ENCODE measurements at regions of chr13 and their contacts with region 1.

Region 1: DNA sequence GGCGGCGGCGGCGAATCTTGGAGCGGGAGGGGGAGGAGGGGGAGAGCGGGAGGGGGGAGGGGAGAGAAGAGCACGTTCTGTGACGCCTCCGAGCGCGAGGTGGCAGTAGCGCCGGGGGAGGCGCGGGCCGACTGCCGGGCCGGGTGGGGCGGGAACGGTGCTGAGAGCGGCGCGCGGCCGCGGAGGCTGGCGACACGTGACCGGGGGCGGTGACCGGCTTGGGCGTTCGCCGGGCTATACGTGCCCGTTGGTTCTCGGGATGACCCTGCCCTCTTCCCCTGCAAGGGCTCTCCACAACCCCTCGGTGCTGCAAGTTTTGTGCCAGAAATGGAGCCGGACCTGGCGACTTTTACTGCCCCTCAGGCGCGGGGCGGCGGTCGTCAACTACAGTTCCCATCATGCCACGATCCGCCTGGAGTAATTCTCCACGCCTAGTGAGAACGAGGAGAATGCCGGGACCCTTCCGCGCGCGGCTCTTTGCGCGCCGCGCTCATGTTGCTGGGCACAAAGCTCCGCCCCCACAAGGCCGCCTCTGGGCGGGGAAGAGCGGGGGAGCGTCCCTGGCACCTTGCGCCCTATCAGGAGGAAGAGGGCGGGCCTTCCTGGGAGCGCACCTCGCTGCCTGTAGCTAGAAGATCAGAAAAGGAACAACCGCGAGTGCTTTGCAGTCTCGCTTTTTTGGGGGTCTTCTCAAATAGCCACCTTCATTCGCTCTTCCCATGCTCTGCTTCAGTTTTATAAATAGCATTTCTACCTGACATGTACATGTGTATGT is at the start of gene KPNA3:
- DNase-seq: peak; percentile 89
- ATAC-seq: peak; percentile 95
- H3K4me3 ChIP-seq: peak within 1 kb of the TSS; percentile 72 to 81 (median 80)
- H3K27ac ChIP-seq: peak within 1 kb of the TSS; percentile 96
- H3K4me1 ChIP-seq: peaks cover 41% of the 10 kb centered on the region
- H3K27me3 ChIP-seq: no peaks in the 10 kb centered on the region; a peak in 1 of 5 replicates
- CTCF ChIP-seq: peak; percentile 64
- EP300 ChIP-seq: no peak
- POLR2A ChIP-seq: peak; percentile 87 to 92
- RAD21 ChIP-seq: peak; percentile 63
- total RNA-seq, gene KPNA3: 28.9 and 69.8 TPM in 2 replicates

Region 2: DNA sequence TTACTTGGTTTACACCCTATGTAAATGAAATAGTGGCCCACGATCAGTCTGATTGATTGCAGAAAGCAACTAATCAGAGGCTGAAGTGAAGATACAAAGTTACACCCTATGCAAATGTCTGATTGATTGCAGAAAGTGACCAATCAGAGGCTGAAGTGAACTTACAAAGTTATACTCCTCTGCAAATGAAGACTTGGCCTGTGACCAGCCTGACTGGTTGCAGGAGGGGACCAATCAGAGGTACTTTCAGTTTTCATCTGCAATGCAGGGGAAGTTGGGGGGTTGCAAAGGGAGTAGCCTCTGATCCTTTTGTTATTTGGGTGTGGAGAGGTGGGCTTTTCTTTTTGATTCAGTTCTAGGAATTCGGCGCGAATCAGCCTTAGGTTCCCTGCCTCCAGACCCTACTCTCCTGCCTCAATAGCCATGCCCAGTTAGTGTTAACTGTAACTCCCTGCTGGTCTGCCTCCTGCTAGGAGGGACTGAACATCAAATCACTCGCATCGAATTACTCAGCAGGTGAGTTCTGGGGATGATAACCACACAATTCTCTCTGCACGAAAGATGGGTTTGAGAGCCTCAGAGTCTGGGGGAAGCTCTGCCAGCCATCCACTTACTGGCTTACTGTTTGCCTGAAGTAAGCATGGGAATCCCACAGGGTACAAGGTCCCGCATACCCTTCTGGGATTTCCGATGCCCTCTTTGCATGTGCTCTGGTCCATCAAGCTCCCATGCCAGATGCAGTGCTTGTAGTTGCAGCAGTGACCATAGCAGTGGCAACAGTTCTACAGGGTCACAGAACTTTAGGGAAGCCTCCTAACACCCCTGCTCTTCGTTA is 156.9 kb before region 1 on chr13:
- CTCF ChIA-PET with region 1: no interaction called
- POLR2A ChIA-PET with region 1: no interaction called
- in situ Hi-C with region 1: no loop called
- intact Hi-C with region 1: no loop called
- DNase-seq: peak; percentile 32
- ATAC-seq: peak; percentile 79
- H3K4me3 ChIP-seq: no peak overlapping the region
- H3K27ac ChIP-seq: no peak overlapping the region
- H3K4me1 ChIP-seq: peaks cover 9% of the 10 kb centered on the region
- H3K27me3 ChIP-seq: no peaks in the 10 kb centered on the region; a peak in 1 of 5 replicates
- CTCF ChIP-seq: no peak
- EP300 ChIP-seq: no peak
- POLR2A ChIP-seq: no peak
- RAD21 ChIP-seq: no peak

Region 3: DNA sequence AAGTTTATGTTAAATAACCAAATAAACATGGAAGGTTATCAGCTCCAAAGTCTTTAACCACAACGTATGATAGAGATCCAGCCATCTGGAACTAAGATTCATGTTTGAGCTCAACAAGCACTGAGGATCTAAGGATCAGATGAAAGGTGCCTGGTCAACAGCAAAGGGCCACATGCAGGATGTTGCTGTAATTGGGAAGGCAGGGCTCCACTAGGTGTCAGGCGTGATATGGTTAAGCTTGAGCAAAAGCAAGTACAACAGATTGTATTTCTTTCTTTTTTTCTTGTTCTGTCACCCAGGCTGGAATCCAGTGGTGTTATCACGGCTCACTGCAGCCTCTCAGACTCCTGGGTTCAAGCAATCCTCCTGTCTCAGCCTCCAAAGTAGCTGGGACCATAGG is 113.5 kb before region 1 on chr13:
- CTCF ChIA-PET with region 1: no interaction called
- POLR2A ChIA-PET with region 1: interaction called, 3 read pairs
- in situ Hi-C with region 1: no loop called
- intact Hi-C with region 1: loop called (anchors 2 kb)
- DNase-seq: peak; percentile 39
- ATAC-seq: peak; percentile 76
- H3K4me3 ChIP-seq: no peak overlapping the region
- H3K27ac ChIP-seq: no peak overlapping the region
- H3K4me1 ChIP-seq: peaks cover 7% of the 10 kb centered on the region
- H3K27me3 ChIP-seq: no peaks in the 10 kb centered on the region
- CTCF ChIP-seq: peak; percentile 66
- EP300 ChIP-seq: no peak
- POLR2A ChIP-seq: no peak
- RAD21 ChIP-seq: 0 out of 2 replicates have a peak, but pooled peaks have one; percentile 13

Region 4: DNA sequence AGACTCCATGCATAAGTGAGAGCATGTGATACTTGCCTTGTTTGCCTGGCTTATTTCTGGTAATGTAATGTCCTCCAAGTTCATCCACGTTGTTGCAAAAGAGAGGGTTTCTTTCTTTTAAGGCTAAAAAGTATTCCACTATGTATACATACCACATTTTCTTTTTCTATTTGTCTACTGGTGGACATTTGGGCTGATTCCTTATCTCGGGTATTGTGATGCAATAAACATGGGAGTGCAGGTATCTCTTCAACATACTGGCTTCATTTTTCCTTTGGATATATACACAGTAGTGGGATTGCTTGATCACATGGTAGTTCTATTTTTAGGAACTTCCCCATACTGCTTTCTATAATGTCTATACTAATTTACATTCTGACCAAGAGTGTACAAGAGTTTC is 51.9 kb before region 1 on chr13:
- CTCF ChIA-PET with region 1: no interaction called
- POLR2A ChIA-PET with region 1: interaction called, 11 read pairs
- in situ Hi-C with region 1: no loop called
- intact Hi-C with region 1: loop called (anchors 2 kb)
- DNase-seq: peak; percentile 74
- ATAC-seq: peak; percentile 76
- H3K4me3 ChIP-seq: no peak overlapping the region
- H3K27ac ChIP-seq: no peak overlapping the region
- H3K4me1 ChIP-seq: peaks cover 36% of the 10 kb centered on the region
- H3K27me3 ChIP-seq: no peaks in the 10 kb centered on the region
- CTCF ChIP-seq: no peak
- EP300 ChIP-seq: peak in 1 of 2 experiments; percentile 64; a peak in 1 of 4 replicates
- POLR2A ChIP-seq: no peak
- RAD21 ChIP-seq: no peak

Region 5: DNA sequence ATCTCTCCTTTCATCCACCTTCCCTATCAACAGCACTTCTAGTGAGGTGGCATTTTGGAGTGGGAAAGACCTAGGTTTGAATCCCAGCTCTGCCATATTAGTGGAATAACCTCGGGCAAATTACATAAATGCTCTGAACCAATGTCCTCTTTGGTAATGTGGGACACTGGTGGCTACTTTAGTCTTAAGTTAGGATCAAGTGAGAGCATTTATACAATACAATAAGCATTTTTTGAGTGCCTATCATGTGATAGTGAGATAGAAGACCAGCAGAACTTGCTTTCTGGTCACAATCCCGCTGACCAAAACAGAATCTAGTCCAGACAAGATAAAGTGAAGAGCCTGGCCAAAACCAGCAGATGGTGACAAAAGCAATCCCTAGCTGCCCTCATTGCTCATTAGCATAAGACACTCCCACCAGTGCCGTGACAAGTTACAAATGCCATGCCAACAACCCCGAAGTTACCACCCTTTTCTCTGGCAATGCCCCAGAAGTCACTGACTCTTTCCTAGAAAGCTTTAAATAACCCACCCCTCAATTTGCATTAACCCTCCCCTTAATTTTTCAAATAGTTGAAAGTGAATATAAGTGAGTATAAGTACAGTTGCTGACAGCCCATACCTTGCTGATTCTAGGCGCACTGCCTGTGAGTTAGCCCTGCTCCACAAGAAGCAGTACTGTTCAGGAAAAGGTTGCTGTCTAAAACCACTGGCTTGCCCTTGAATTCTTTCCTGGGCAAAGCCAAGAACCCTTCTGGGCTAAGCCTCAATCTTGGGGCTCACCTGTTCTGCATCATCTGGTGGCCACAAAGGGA is 28.7 kb after region 1 on chr13:
- CTCF ChIA-PET with region 1: no interaction called
- POLR2A ChIA-PET with region 1: interaction called, 29 read pairs
- in situ Hi-C with region 1: no loop called
- intact Hi-C with region 1: no loop called
- DNase-seq: no peak
- ATAC-seq: no peak; the same call in 2 of the 3 replicates
- H3K4me3 ChIP-seq: no peak overlapping the region
- H3K27ac ChIP-seq: peak overlapping the region; percentile 53
- H3K4me1 ChIP-seq: peaks cover 27% of the 10 kb centered on the region
- H3K27me3 ChIP-seq: no peaks in the 10 kb centered on the region
- CTCF ChIP-seq: no peak
- EP300 ChIP-seq: no peak
- POLR2A ChIP-seq: no peak
- RAD21 ChIP-seq: no peak

Region 6: GRCh38 chr13:49936085-49936940 is 143.6 kb after region 1 on chr13 and contains the start of gene SPRYD7:
- CTCF ChIA-PET with region 1: no interaction called
- POLR2A ChIA-PET with region 1: interaction called, 10 read pairs
- in situ Hi-C with region 1: no loop called
- intact Hi-C with region 1: loop called (anchors 5 kb)
- DNase-seq: peak; percentile 95
- ATAC-seq: peak; percentile 98
- H3K4me3 ChIP-seq: peak within 1 kb of the TSS; percentile 81 to 94 (median 88)
- H3K27ac ChIP-seq: peak within 1 kb of the TSS; percentile 74
- H3K4me1 ChIP-seq: peaks cover 41% of the 10 kb centered on the region
- H3K27me3 ChIP-seq: no peaks in the 10 kb centered on the region; a peak in 1 of 5 replicates
- CTCF ChIP-seq: peak; percentile 99
- EP300 ChIP-seq: peak in 1 of 2 experiments; percentile 46; a peak in 1 of 4 replicates
- POLR2A ChIP-seq: peak; percentile 49 to 88
- RAD21 ChIP-seq: peak; percentile 81
- total RNA-seq, gene SPRYD7: 5.9 and 6.8 TPM in 2 replicates

Region 7: DNA sequence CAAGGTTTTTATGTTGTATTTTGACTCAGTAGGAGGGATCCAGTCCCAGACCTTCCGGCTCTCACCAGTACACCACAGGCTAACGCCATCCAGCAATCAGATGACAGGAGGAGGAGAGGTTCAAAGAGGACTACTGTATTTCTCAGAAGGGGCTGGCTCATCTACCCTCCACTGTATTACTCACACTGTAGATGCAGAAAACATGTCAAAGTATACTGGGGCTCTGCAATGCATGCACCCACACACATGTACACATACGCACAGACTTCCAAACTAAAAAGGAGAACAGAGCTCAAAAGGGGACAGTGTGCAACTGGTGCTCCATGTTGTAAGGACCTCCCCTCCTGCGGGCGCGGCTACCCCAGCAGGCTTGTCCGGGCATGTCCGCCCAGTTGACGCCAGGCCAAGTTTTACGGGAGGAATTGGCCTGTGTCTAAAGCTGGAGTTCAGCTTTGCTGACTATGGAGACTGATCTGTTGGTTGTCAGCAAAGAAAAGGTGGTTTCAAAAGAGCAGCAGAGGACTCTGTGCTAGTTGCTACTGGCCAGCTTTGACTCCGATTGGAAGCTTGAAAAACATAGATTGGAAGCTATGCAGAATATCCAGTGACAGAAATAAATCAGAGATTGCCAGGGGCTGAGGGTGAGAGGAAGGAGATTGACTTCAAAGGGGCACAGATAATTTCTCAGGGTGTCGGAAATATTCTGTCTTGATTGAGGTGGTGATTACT is 736.6 kb after region 1 on chr13:
- CTCF ChIA-PET with region 1: no interaction called
- POLR2A ChIA-PET with region 1: no interaction called
- in situ Hi-C with region 1: no loop called
- intact Hi-C with region 1: no loop called
- DNase-seq: no peak
- ATAC-seq: no peak; the same call in 2 of the 3 replicates
- H3K4me3 ChIP-seq: no peak overlapping the region
- H3K27ac ChIP-seq: peak overlapping the region; percentile 34
- H3K4me1 ChIP-seq: peaks cover 10% of the 10 kb centered on the region
- H3K27me3 ChIP-seq: no peaks in the 10 kb centered on the region
- CTCF ChIP-seq: no peak
- EP300 ChIP-seq: no peak
- POLR2A ChIP-seq: no peak
- RAD21 ChIP-seq: no peak

Region 8: GRCh38 chr13:51015973-51016372 is 1223.2 kb after region 1 on chr13:
- CTCF ChIA-PET with region 1: no interaction called
- POLR2A ChIA-PET with region 1: no interaction called
- in situ Hi-C with region 1: no loop called
- intact Hi-C with region 1: no loop called
- DNase-seq: no peak
- ATAC-seq: no peak
- H3K4me3 ChIP-seq: no peak overlapping the region
- H3K27ac ChIP-seq: no peak overlapping the region
- H3K4me1 ChIP-seq: no peaks in the 10 kb centered on the region
- H3K27me3 ChIP-seq: peaks cover 0 to 6% of the 10 kb centered on the region in 2 experiments; a peak in 3 of 5 replicates
- CTCF ChIP-seq: no peak
- EP300 ChIP-seq: no peak
- POLR2A ChIP-seq: no peak
- RAD21 ChIP-seq: no peak

Measured in HepG2 (cell line).